Heart left ventricle (tissue), 16 donors: ENCODE measurements at regions of chr1 and their contacts with region 1.

Region 1: GRCh38 chr1:40040511-40041465 is at the start of gene CAP1:
- DNase-seq: peak; percentile 99 to 100 (median 99)
- ATAC-seq: peak; percentile 91 to 95 (median 95)
- H3K4me3 ChIP-seq: peak within 1 kb of the TSS; percentile 72 to 100 (median 94)
- H3K27ac ChIP-seq: peak within 1 kb of the TSS; percentile 96 to 100 (median 99)
- H3K4me1 ChIP-seq: peaks cover 23 to 84% (median 61%) of the 10 kb centered on the region in 12 donors
- H3K27me3 ChIP-seq: no peaks in the 10 kb centered on the region
- CTCF ChIP-seq: peak in 2 of 12 donors; percentile 2 to 12
- POLR2A ChIP-seq: no peak
- total RNA-seq, gene CAP1: 52.1 to 249 (median 69.9) TPM

Region 2: GRCh38 chr1:39859859-39860812 is 180.7 kb before region 1 on chr1:
- intact Hi-C with region 1: no loop called
- DNase-seq: no peak
- ATAC-seq: no peak
- H3K4me3 ChIP-seq: no peak overlapping the region
- H3K27ac ChIP-seq: no peak overlapping the region
- H3K4me1 ChIP-seq: peaks cover 0 to 5% (median 0%) of the 10 kb centered on the region in 12 donors
- H3K27me3 ChIP-seq: no peaks in the 10 kb centered on the region
- CTCF ChIP-seq: no peak
- POLR2A ChIP-seq: no peak

Region 3: DNA sequence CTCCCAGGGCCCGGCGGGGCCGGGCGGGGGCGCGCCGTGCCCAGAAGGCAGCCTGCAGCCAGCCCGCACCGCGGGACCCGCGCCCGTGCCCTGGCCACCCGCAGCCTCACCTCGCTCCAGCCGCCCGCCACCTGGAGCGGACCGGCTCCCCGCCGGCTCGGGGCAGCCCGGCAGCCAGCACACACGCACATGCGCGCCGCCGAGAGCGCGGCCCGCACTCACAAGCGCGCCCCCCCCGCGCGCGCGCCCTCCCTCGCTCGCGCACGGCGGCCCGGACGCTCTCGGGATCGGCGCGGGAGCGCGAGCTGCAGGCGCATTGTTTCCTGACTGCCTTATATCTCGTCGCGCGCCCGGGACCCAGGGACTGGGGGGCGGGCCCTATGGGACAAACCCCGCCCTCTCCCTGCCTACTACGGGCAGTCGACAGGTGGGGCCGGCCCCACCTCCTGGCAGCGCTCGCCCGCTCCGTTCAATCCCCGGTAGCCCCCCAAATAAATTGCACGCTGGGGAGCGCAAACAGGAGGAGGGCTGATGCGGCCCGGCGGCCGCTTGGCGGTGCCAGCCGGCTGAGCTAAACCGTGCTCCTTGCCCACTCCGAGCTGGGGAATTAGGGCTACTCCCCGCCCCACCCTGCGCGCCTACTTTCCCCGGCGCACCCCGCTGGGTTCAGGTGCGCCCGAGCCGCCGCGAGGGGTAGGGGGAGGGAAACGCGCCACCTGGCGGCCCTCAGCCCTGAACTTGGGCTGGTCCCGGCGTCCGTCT is 138.9 kb before region 1 on chr1 and contains the start of gene MYCL:
- intact Hi-C with region 1: no loop called
- DNase-seq: peak; percentile 53 to 83 (median 69)
- ATAC-seq: peak; percentile 65 to 88 (median 84)
- H3K4me3 ChIP-seq: peak within 1 kb of the TSS; percentile 43 to 78 (median 58)
- H3K27ac ChIP-seq: peak within 1 kb of the TSS in 3 of 12 donors; percentile 31 to 53 (median 42)
- H3K4me1 ChIP-seq: peaks cover 0 to 29% (median 9%) of the 10 kb centered on the region in 12 donors
- H3K27me3 ChIP-seq: peaks cover 0 to 73% (median 21%) of the 10 kb centered on the region in 9 donors
- CTCF ChIP-seq: peak; percentile 44 to 75 (median 71)
- POLR2A ChIP-seq: no peak
- total RNA-seq, gene MYCL: 0.27 to 3.0 (median 0.75) TPM

Region 4: DNA sequence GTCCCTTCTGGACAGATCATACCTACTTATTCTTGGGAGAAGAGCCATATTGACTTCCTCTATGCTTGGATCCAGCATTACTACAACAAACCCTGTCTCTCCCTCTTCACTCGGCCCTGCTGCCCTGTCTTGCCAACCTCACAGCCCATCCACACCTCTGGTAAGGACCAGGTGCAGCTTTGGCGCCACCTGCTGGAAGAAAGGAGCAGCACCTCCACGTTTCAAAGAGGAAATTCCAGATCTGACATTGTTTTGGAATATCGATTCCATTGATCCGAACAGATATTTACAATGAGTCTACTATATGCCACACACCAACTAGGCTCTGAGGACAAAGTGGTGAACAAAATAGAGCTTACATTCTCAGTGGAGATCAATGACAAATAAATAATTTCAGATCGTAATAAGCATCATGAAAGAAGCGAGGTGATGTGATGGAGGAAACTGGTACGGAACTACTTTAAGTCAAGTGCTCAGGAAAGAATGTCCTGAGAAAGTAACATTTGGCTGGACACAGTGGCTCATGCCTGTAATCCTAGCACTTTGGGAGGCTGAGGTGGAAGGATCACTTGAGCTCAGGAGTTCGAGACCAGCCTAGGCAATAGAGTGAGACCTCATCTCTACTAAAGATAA is 67.2 kb before region 1 on chr1:
- intact Hi-C with region 1: loop called in 2 of 10 experiments (anchors 10 kb)
- DNase-seq: peak; percentile 55 to 85 (median 75)
- ATAC-seq: peak; percentile 63 to 86 (median 84)
- H3K4me3 ChIP-seq: no peak overlapping the region
- H3K27ac ChIP-seq: no peak overlapping the region
- H3K4me1 ChIP-seq: peaks cover 0 to 5% (median 0%) of the 10 kb centered on the region in 12 donors
- H3K27me3 ChIP-seq: no peaks in the 10 kb centered on the region
- CTCF ChIP-seq: peak; percentile 93 to 99 (median 96)
- POLR2A ChIP-seq: no peak

Region 5: DNA sequence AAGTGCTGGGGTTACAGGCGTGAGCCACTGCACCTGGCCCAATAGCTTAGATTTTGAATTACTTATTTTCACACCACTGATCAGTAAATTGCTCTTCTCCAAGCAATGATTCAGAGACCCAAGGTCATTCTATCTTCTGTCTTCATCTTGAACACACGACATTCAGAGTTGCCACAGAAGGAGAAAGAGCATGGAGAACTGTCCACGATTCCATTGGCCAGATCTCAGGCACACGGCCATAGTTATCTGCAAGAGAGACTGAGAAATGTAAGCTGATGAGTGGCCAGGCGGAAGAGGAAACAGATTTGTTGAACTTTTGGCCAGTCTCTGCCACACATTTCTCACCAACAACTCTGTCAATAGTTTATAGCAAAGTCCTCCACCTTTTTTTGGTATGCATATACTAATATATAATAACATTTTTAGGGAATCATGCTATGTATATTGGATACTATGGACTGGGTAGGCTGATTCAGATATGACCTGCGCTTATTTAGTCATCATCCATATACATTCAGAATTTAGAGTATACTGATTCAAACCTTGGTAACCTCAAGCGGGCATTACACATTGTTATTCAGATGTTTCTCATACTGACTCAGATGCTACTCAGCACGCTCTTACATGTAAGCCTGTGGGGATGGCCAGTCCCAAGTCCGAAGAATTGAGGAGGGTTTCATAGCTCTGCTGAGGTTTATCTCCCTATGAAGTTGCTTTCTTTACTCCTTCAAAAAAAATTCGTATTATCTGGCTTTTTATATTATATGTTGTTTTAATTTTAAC is 25.8 kb before region 1 on chr1:
- intact Hi-C with region 1: no loop called
- DNase-seq: no peak
- ATAC-seq: no peak
- H3K4me3 ChIP-seq: no peak overlapping the region
- H3K27ac ChIP-seq: no peak overlapping the region
- H3K4me1 ChIP-seq: peaks cover 0 to 8% (median 0%) of the 10 kb centered on the region in 12 donors
- H3K27me3 ChIP-seq: no peaks in the 10 kb centered on the region
- CTCF ChIP-seq: no peak
- POLR2A ChIP-seq: no peak

Region 6: DNA sequence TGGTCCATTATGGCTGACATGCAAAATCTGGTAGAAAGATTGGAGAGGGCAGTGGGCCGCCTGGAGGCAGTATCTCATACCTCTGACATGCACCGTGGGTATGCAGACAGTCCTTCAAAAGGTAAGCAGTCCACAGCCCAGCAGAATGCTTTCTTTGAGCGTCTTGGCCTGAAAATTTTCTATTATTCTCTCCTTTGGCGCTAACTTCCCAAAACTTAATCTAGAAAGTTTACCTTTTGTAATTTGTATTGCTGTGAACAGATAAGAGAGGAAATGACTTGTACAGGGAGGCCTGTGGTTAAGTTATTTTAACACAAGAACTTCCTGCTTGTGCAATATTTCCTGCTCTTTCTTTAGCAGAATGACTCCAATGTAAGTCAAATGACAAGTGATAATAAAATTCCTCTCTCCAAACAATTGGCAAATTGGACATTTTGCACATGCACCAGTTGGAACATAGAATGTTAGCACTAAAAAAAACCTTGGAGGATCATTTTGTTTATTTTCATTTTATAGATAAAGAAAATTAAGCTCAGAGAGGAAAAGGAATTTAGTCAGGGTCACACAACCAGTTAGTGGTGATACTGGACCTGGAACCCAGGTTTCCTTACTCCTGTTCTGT is 18.7 kb after region 1 on chr1:
- intact Hi-C with region 1: loop called in 2 of 10 experiments (anchors 2 kb)
- DNase-seq: no peak
- ATAC-seq: peak; percentile 43 to 86 (median 71)
- H3K4me3 ChIP-seq: peak overlapping the region in 2 of 12 donors; percentile 12 to 17
- H3K27ac ChIP-seq: peak overlapping the region in 11 of 12 donors; percentile 23 to 88 (median 52)
- H3K4me1 ChIP-seq: peaks cover 14 to 97% (median 64%) of the 10 kb centered on the region in 12 donors
- H3K27me3 ChIP-seq: no peaks in the 10 kb centered on the region
- CTCF ChIP-seq: no peak
- POLR2A ChIP-seq: no peak